Heart right ventricle (tissue), 16 donors: ENCODE measurements at regions of chr7 and their contacts with region 1.

Region 1: DNA sequence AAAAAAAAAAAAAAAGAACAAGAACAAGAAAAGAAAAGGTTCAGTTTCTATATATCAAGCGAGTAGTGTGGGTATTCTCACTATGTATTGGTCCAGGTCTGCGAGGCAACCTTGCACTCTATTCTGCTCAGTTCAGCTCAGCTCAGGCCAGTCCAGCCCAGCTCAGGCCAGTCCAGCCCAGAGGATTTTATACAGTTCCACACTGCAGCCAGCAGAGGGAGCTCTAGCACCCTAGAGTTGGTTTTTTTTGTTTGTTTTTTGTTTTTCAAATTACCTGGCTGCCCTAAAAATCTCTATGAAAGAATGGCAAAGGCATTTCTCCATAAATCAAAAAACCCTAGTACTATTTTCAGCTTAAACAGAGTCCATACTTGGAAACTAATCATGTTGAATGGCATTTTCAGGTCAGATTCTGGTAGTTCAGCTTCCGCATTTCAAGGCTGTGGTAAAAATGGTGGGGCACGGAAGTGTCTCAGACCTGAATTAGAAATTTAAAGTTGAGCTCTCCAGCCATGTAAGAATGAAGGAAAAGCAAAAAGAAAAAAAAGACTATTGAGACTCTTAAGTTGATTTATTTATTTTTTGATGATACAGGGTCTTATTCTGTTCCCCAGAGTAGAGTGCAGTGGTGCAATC is 55.2 kb upstream of the GSDME start:
- DNase-seq: peak; percentile 33 to 34
- ATAC-seq: peak in 7 of 8 donors; percentile 74 to 85 (median 83)
- H3K4me3 ChIP-seq: no peak overlapping the region
- H3K27ac ChIP-seq: no peak overlapping the region
- H3K4me1 ChIP-seq: no peaks in the 10 kb centered on the region
- H3K27me3 ChIP-seq: no peaks in the 10 kb centered on the region
- CTCF ChIP-seq: peak; percentile 82 to 93 (median 92)

Region 2: GRCh38 chr7:24609059-24609458 is 203.4 kb before region 1 on chr7:
- intact Hi-C with region 1: no loop called
- DNase-seq: no peak
- ATAC-seq: no peak
- H3K4me3 ChIP-seq: no peak overlapping the region
- H3K27ac ChIP-seq: no peak overlapping the region
- H3K4me1 ChIP-seq: no peaks in the 10 kb centered on the region
- H3K27me3 ChIP-seq: no peaks in the 10 kb centered on the region
- CTCF ChIP-seq: no peak

Region 3: GRCh38 chr7:25083201-25083600 is 270.8 kb after region 1 on chr7:
- intact Hi-C with region 1: no loop called
- DNase-seq: no peak
- ATAC-seq: no peak
- H3K4me3 ChIP-seq: no peak overlapping the region
- H3K27ac ChIP-seq: no peak overlapping the region
- H3K4me1 ChIP-seq: no peaks in the 10 kb centered on the region
- H3K27me3 ChIP-seq: no peaks in the 10 kb centered on the region
- CTCF ChIP-seq: no peak

Region 4: DNA sequence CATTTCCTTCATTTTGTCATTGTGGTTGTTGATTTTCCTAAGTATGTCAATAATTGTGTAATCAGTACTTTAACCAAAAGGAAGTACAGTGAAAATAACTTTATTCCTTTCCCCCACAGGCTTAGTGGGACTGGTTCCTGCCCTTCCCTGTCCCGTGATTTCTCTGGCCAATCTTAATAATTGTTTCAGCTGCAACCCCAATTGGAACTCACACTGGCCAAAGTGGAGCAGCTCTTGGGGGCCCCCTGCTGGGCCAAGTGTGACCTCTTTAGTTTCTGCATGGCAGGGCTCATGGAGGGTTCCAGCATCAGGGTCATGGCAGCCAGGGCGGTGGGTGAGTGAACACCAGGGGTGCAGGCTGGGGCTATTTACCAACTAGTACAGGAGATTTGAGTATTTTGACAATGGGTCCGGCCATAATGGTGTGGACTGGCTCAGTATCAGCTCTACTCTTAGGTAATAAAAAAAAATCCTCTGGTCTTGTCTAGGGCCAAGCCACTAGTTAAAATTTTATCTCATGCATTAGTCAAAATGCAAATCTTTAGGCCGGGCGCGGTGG is 280.9 kb after region 1 on chr7:
- intact Hi-C with region 1: loop called in 8 of 10 experiments (anchors 2 to 10 kb)
- DNase-seq: peak; percentile 47 to 71
- ATAC-seq: peak; percentile 74 to 90 (median 84)
- H3K4me3 ChIP-seq: no peak overlapping the region
- H3K27ac ChIP-seq: no peak overlapping the region
- H3K4me1 ChIP-seq: peaks cover 0 to 6% (median 0%) of the 10 kb centered on the region in 9 donors
- H3K27me3 ChIP-seq: peaks cover 0 to 3% (median 0%) of the 10 kb centered on the region in 7 donors
- CTCF ChIP-seq: peak; percentile 60 to 88 (median 69)

Region 5: GRCh38 chr7:25098096-25099046 is 285.9 kb after region 1 on chr7:
- intact Hi-C with region 1: loop called in 8 of 10 experiments (anchors 2 to 10 kb)
- DNase-seq: peak; percentile 22
- ATAC-seq: peak in 4 of 8 donors; percentile 48 to 70 (median 65)
- H3K4me3 ChIP-seq: no peak overlapping the region
- H3K27ac ChIP-seq: no peak overlapping the region
- H3K4me1 ChIP-seq: peaks cover 0 to 6% (median 0%) of the 10 kb centered on the region in 9 donors
- H3K27me3 ChIP-seq: no peaks in the 10 kb centered on the region
- CTCF ChIP-seq: peak; percentile 53 to 91 (median 84)